ENCODE measurements at regions of chr3 and their contacts with region 1.

Region 1: DNA sequence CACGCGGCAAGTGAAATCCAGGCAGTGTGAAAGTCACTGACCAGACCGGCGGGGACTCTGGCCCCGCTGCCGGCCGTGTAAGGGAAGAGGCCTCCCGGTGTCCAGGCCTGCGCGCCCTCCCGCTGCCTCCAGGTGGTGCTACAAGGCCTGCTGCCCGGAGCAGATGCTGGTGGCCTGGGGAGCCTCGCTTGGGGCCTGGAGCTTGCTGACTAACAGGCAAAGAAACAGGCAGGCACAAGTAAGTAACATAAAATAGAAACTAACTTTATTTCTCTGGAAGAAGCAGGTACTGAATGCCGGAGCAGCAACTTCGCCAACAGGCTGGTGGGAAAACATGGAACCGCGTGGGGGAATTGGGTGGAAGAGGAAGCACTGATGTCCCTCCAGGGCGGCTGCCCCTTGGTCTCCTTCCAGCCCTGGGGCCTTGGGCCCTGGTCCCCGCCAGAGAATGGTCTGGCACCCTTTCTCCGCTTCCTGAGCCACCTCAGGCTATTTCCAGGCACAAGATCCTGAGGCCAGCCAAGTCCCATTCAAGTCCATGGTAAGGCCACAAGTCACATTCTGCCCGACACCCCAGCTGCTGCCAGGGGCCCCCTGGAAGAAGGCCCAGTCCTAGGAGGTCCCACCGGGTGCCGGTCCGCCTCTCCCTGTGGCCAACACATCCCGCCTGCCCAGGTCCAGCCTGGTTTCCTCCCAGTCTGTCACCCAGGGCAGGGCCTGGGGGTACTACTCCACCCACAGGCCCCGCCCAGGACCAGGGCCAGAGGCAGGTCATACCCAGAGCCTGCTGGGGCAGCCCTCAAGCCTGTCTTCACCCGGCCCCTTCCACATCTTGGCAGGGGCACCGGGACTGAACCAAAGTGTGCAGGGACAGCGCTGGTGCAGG is 45.0 kb downstream of the TNK2 start:
- DNase-seq: peak; percentile 78 to 95
- H3K4me3 ChIP-seq: no peak overlapping the region
- H3K27ac ChIP-seq: peak overlapping the region; percentile 23; the same call in 1 of the 2 replicates
- H3K4me1 ChIP-seq: peaks cover 18% of the 10 kb centered on the region
- H3K27me3 ChIP-seq: no peaks in the 10 kb centered on the region
- CTCF ChIP-seq: peak; percentile 95

Region 2: DNA sequence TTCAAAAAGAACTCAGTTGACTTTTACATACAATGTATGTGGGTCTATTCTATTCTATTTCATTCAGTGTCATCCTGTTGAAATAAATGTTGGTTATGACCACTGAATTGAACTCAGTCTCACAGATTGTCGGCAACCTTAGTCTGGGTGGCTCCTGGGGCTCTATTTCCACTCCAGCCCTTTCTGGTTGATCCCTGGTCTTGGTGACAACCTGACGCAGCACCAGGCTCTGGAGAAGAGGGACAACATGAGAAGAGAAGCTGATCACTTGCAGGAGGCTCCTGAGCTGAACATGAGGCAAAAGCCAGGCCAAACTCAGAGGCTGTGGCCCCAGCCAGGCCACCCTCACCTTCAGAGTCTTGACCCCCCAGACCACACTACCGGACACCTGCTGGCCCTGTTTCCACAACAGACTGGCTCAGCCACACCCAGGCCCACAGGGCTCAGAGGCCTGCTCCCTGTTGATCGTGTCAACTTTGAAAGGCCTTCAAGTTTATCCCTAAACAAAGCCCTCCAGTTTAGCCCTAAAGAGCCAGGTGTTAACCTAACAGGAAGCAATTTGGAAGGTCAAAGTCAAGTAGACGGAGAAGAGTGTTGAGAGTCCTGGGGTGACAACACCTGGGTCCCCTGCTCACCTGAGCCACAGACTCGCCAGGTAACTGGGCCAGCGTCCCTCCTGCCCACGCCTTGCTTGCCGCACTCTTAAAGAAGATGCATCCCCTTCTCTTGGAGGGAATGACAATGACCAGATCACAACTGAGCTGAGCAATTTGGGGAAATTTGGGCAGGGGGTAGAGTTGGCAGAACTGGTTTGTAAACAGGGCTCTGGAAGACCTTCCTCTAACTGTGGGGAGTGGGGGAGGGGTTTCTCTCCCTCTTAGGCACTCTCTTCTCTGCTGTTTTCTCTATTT is 158.0 kb before region 1 on chr3:
- CTCF ChIA-PET with region 1: interaction called, 11 read pairs
- POLR2A ChIA-PET with region 1: no interaction called
- intact Hi-C with region 1: no loop called
- DNase-seq: no peak
- H3K4me3 ChIP-seq: no peak overlapping the region
- H3K27ac ChIP-seq: no peak overlapping the region
- H3K4me1 ChIP-seq: no peaks in the 10 kb centered on the region
- H3K27me3 ChIP-seq: no peaks in the 10 kb centered on the region
- CTCF ChIP-seq: no peak

Region 3: DNA sequence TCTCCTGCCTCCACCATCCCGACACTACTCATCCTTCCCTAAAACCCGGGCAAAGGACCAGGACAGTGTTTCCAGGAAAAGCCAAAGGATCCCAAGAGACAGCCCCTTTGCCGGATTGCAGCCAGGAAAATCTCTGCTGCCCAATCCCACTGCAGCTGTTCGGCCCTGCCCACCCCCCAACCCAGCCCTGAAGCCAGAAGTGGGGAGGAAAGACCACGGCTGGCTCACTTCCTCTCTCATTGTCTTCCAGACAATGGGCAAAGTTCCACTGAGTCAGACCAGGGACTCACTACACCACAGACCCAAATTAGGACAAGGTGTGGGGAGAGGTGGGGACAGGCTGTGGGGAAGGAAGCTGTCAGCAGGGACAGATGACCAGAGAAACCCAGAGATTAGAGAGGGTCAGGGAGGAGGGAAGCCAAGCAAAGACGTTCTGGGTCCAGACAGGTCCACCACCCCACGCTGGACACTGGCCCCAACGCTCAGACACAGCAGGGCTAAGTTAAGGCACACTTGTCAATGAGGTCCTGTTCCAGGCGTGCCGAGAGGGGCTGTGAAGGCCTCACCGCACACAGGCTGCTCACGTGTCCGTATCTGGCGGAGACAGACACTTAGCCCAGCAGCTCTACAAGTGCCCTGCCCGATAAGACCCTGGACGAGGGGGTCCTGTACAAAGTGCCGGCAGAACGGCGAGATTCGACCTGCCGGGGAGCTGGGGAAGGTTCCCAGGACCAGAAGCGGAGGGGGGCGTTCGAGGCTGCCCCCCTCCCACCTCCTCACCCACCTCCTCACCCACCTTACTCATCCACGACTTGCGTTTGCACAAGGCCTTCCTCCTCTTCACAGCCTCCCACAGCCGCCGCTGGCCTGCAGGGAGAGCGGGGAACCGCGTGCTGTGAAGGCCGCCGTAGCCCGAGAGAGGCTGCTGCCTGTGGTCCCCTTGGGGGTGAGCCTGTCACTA is 23.1 kb after region 1 on chr3:
- CTCF ChIA-PET with region 1: interaction called, 12 read pairs
- POLR2A ChIA-PET with region 1: no interaction called
- intact Hi-C with region 1: no loop called
- DNase-seq: no peak
- H3K4me3 ChIP-seq: no peak overlapping the region
- H3K27ac ChIP-seq: no peak overlapping the region
- H3K4me1 ChIP-seq: no peaks in the 10 kb centered on the region
- H3K27me3 ChIP-seq: no peaks in the 10 kb centered on the region
- CTCF ChIP-seq: no peak

Region 4: DNA sequence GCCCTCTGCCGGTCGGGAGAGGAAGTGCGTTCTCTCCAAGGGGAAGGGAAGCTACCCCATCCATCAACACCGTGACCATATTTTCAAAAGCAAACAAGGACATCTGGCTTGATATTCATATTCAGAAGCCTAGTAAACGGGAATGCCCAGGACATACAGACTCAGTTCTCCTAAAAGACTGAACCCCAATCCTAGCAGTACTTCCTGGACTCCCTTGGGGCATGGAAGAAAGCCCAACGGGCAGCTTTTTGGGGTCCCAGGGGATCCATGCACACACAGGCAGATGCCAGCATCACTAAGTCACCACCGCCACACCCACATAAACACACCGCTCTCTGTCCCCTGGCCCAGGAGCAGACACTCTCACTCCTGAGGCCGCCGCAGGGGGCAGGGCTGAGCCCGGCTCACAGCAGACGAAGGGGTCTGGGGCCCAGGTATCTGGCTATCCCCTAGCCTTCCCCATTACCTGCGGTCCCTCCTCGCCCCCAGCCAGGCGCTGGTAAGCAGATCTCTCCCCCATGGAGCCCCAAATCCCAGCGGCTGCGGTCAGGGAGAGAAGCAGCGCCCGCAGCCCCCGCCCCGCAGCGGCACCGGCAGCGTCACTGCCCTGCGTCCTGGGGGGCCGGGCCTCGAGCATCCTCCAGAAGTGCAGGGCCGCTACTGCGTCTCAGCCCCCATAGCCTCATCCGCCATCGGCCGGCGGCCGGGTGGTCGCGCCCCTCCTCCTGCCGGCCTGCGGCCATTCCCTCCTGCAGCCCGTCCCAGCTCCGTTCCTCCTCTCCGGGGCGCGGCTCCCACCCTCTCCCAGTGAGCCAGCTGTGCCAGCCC is 31.6 kb after region 1 on chr3:
- CTCF ChIA-PET with region 1: interaction called, 20 read pairs
- POLR2A ChIA-PET with region 1: no interaction called
- intact Hi-C with region 1: loop called (anchors 1 kb)
- DNase-seq: peak; percentile 84 to 86
- H3K4me3 ChIP-seq: peak overlapping the region; percentile 96
- H3K27ac ChIP-seq: peak overlapping the region; percentile 42
- H3K4me1 ChIP-seq: peaks cover 34% of the 10 kb centered on the region
- H3K27me3 ChIP-seq: no peaks in the 10 kb centered on the region
- CTCF ChIP-seq: peak; percentile 98

Measured in PC-9 (cell line).